Right lobe of liver (tissue), 6 donors: ENCODE measurements at regions of chr1 and their contacts with region 1.

Region 1: DNA sequence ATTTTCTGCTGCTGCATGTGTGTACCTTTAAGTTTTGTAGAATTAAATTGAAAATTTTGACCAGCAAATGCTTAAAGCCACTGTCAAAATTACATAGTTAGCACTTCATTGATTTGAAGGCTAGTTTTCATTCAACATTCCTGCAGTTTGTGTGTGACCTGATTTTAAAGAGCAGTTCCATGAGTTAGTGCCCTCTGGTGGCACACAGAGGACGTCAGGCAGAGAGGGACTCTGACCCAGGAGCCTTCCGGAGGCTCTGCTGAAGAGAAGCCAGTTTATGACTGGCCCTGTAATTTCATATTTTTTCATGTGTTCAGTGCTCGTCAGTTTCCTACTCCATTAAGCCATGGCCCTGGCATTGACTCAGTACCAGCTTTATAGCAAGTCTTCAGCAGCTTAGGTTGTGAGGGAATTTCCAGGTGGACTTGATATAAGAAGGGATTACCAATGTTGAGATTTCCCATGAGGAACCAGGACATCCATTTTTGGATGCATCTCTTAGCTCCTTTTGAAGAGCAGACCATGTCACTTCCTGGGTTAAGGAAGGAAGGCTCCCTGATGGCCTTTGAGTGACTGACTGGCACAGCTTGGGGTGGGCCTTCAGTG is 104.7 kb downstream of the CAMTA1 start:
- DNase-seq: peak in 2 of 3 donors; percentile 58 to 73
- ATAC-seq: peak; percentile 94 to 99 (median 98)
- H3K4me3 ChIP-seq: no peak overlapping the region
- H3K27ac ChIP-seq: no peak overlapping the region
- H3K4me1 ChIP-seq: peaks cover 0 to 4% (median 0%) of the 10 kb centered on the region in 4 donors
- H3K27me3 ChIP-seq: no peaks in the 10 kb centered on the region
- CTCF ChIP-seq: peak; percentile 85 to 94 (median 88)
- POLR2A ChIP-seq: no peak

Region 2: DNA sequence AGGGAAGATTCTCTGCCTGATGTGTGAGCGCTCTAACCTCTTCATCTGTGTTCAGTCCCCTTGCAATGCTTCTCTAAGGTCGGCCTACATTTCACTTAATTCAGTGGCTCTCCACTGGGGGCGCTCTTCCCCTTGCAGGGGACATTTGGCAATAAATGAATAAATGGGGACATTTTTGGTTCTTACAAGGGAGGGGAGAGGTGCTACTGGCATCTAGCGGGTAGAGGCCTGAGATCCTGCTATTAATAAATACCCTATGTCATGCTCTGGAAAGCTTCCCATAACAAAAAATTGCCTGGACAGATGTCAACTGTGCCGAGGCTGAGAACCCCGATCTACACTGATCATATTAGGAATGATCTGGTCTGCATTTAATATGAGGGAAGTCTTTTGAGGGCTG is 162.4 kb before region 1 on chr1:
- intact Hi-C with region 1: loop called in 1 of 2 experiments (anchors 10 kb)
- DNase-seq: peak in 2 of 3 donors; percentile 47 to 52
- ATAC-seq: peak; percentile 71 to 75 (median 72)
- H3K4me3 ChIP-seq: no peak overlapping the region
- H3K27ac ChIP-seq: no peak overlapping the region
- H3K4me1 ChIP-seq: no peaks in the 10 kb centered on the region
- H3K27me3 ChIP-seq: no peaks in the 10 kb centered on the region
- CTCF ChIP-seq: peak; percentile 71 to 89 (median 83)
- POLR2A ChIP-seq: no peak

Region 3: GRCh38 chr1:6794164-6794563 is 95.8 kb before region 1 on chr1:
- intact Hi-C with region 1: loop called (anchors 10 kb)
- DNase-seq: no peak
- ATAC-seq: peak in 3 of 4 donors; percentile 47 to 63 (median 50)
- H3K4me3 ChIP-seq: no peak overlapping the region
- H3K27ac ChIP-seq: no peak overlapping the region
- H3K4me1 ChIP-seq: no peaks in the 10 kb centered on the region
- H3K27me3 ChIP-seq: no peaks in the 10 kb centered on the region
- CTCF ChIP-seq: peak; percentile 50 to 58 (median 52)
- POLR2A ChIP-seq: no peak